Activated B cell treated with CpG ODN at 0.5 μM for 24 hours (primary cell): ENCODE measurements at regions of chr13 and their contacts with region 1.

Region 1: DNA sequence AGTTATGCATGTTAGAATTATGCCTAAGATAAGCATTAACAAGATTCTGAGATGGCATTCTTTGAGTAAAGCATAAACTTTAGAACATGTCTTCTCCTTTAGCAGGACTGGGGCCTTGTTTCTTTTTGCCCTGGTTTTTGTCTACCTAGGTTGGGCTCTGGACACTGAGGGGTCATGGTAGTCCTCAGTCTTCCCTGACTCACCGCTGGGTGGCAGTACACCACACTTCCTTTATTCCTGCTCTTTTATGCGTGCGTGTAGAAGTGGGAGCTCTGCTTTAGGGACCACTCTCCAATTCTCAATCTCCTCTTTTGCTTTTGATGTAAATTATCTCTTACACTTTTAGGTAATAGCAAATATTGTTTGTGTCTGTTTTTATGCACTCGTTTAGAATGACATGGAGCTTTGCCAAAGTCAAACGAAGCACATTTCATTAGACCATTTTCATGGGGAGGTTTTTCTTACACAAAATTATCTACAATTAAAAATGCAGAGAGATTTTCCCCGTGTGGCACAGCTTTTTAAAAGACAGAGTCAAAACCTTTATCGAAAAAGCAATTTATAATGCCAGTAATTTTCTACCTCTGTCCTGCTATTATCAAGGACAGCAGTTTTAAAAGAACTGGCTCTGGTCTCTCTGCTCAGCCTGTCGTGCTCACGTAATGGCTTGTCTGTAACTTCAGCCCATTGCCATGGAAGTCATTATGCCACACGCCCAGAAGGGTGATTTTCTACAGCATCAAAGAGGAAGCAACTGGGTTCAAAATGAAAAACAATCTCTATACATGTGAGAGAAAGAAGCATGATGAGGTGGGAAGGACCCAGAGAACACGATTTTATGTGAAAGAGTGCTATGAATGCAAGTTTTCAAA is 413.9 kb downstream of the COG6 start:
- DNase-seq: peak; percentile 50
- ATAC-seq: peak; percentile 89
- H3K4me3 Mint-ChIP-seq: peak overlapping the region; percentile 47
- H3K27ac Mint-ChIP-seq: peak overlapping the region; percentile 19
- H3K4me1 Mint-ChIP-seq: peaks cover 12% of the 10 kb centered on the region
- H3K27me3 Mint-ChIP-seq: no peaks in the 10 kb centered on the region
- CTCF ChIP-seq: peak; percentile 27

Region 2: DNA sequence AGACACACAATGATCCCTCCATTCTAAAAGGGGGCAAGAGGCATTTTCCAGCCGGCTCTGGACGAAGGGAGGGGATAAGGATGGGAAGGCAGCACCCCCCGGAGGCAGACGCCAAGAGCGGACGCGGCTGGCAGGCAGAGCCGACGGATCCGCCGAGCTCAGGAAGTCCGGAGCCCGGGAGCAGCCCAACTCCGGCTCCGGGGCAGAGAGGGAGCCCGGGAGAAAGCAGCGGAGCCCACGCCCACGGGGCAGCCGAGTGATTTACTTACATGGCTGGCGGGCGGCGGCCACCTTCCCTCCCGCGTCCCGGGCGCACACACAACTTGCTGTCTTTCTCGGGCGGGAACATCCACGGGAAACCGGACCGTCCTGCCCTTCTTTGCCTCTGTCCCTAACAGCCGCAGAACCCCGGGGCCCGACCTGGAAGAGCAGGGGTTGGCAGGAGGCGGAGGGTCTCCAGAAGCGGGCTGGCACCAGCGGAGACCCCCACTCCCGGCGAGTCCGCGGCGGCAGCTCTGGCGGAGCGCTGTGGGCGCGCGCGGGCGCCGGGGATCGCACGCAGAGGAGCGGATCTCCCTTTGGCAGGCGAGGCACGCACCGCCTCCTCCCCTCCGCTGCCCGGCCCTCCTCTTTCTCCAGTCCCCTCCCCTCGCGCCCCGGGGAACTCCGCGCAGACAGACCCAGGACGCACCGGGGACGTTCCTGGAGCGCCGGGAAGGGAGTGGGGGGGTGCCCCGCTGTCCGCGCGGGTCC is 466.6 kb before region 1 on chr13 and contains the start of gene LHFPL6:
- CTCF ChIA-PET with region 1: no interaction called
- POLR2A ChIA-PET with region 1: no interaction called
- intact Hi-C with region 1: no loop called
- DNase-seq: peak; percentile 47
- ATAC-seq: peak; percentile 98
- H3K4me3 Mint-ChIP-seq: peak within 1 kb of the TSS; percentile 73
- H3K27ac Mint-ChIP-seq: no peak within 1 kb of the TSS
- H3K4me1 Mint-ChIP-seq: peaks cover 13% of the 10 kb centered on the region
- H3K27me3 Mint-ChIP-seq: peaks cover 33% of the 10 kb centered on the region
- CTCF ChIP-seq: no peak
- total RNA-seq, gene LHFPL6: 0.13 and 0.20 TPM in 2 replicates

Region 3: GRCh38 chr13:39942552-39943273 is 126.7 kb before region 1 on chr13:
- CTCF ChIA-PET with region 1: interaction called, 18 read pairs
- POLR2A ChIA-PET with region 1: no interaction called
- intact Hi-C with region 1: loop called (anchors 2 kb)
- DNase-seq: peak; percentile 44
- ATAC-seq: peak; percentile 100
- H3K4me3 Mint-ChIP-seq: no peak overlapping the region
- H3K27ac Mint-ChIP-seq: no peak overlapping the region
- H3K4me1 Mint-ChIP-seq: no peaks in the 10 kb centered on the region
- H3K27me3 Mint-ChIP-seq: peaks cover 1% of the 10 kb centered on the region
- CTCF ChIP-seq: peak; percentile 93

Region 4: DNA sequence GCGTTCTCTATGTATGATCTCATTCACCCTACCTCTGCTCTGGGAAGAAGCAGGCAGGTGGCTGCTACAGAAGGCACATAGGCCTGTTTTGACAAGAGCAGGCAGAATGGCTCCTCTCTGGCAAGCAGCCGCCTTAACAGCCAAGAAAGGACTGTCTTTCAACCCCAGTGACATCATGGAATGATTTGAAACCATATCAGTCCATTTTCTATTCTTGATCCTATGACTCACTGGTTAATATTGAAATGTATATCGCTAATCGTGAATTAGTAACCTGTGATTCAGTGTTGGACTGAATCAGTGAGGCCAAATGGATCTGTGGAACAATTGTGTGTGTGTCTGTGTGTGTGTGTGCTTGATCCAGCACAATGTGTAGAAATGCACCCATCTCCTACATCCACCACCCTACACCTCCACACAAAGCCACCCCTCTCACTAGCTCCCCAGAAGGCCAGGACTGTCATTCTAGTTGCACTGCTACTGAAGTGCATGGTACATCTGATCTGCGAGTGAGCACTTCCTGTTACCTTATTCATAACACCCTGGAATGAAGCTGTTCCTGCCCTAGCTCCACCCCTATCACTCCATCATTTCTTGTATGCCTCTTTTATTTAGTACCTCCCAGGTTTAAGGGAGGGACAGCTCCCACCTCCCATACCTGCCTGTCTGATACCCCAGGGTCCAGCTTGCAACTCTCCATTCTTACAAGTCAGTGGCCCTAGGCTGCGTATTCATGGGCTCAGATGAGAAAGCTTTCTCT is 137.0 kb after region 1 on chr13:
- CTCF ChIA-PET with region 1: interaction called, 9 read pairs
- POLR2A ChIA-PET with region 1: no interaction called
- intact Hi-C with region 1: loop called (anchors 1 kb)
- DNase-seq: peak; percentile 52
- ATAC-seq: peak; percentile 66
- H3K4me3 Mint-ChIP-seq: peak overlapping the region; percentile 76
- H3K27ac Mint-ChIP-seq: peak overlapping the region; percentile 100
- H3K4me1 Mint-ChIP-seq: peaks cover 72% of the 10 kb centered on the region
- H3K27me3 Mint-ChIP-seq: no peaks in the 10 kb centered on the region
- CTCF ChIP-seq: no peak

Region 5: GRCh38 chr13:40597740-40598370 is 528.4 kb after region 1 on chr13:
- CTCF ChIA-PET with region 1: interaction called, 3 read pairs
- POLR2A ChIA-PET with region 1: no interaction called
- intact Hi-C with region 1: loop called (anchors 5 kb)
- DNase-seq: no peak
- ATAC-seq: no peak
- H3K4me3 Mint-ChIP-seq: peak overlapping the region; percentile 28
- H3K27ac Mint-ChIP-seq: peak overlapping the region; percentile 76
- H3K4me1 Mint-ChIP-seq: peaks cover 93% of the 10 kb centered on the region
- H3K27me3 Mint-ChIP-seq: no peaks in the 10 kb centered on the region
- CTCF ChIP-seq: no peak

Region 6: DNA sequence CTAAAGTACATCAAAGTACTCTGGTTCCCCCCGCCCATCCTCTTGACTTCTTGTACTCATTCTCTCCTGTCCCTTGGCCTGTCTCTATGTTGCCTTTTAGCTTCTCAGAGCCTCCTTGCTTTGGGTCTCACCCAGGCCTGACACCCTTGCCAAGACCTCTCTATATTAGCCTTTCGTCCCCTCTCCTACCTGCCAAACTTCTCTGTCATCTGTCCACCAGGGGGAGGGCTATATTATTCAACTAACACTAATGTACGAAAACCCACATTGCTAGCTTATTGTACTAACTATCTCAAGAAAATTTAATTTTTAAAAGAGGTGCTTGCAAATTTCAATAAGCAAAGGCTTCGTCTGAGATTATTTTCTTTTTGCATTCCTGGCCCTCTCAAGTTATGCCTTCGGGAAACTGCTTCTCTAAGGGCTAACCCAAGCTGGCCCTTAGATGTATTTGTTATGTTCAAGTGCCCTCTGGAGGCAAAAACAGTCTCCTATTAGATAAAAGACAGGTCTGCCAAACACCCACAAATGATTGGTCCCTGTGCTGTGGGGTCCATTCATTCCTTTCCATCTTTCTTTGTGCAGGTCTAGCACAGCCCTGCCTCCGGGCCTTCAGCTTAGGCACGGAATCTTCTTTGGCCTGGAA is 707.9 kb after region 1 on chr13:
- CTCF ChIA-PET with region 1: interaction called, 10 read pairs
- POLR2A ChIA-PET with region 1: no interaction called
- intact Hi-C with region 1: loop called (anchors 1 kb)
- DNase-seq: no peak
- ATAC-seq: peak; percentile 85
- H3K4me3 Mint-ChIP-seq: peak overlapping the region; percentile 70
- H3K27ac Mint-ChIP-seq: peak overlapping the region; percentile 91
- H3K4me1 Mint-ChIP-seq: peaks cover 25% of the 10 kb centered on the region
- H3K27me3 Mint-ChIP-seq: no peaks in the 10 kb centered on the region
- CTCF ChIP-seq: peak; percentile 91